Heart right ventricle (tissue), 16 donors: ENCODE measurements at regions of chr11 and their contacts with region 1.

Region 1: DNA sequence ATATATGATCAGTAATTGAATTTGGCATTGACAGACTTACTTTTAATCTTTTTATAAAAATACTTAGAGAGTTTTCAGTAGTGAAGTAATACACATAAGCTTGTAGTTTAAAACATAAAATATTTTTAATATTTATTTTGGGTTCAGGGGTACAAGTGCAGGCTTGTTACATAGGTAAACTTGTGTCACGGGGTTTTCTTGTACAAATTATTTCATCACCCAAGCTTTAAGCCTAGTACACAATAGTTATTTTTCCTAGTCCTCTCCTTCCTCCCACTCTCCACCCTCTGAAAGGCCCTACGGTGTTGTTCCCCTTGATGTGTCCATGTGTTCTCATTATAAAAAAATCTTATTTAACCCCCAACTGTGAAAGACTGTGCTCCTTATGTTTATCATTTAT is 1397.8 kb upstream of the RAG2 start:
- DNase-seq: no peak
- ATAC-seq: no peak
- H3K4me3 ChIP-seq: no peak overlapping the region
- H3K27ac ChIP-seq: no peak overlapping the region
- H3K4me1 ChIP-seq: no peaks in the 10 kb centered on the region
- H3K27me3 ChIP-seq: no peaks in the 10 kb centered on the region
- CTCF ChIP-seq: no peak

Region 2: DNA sequence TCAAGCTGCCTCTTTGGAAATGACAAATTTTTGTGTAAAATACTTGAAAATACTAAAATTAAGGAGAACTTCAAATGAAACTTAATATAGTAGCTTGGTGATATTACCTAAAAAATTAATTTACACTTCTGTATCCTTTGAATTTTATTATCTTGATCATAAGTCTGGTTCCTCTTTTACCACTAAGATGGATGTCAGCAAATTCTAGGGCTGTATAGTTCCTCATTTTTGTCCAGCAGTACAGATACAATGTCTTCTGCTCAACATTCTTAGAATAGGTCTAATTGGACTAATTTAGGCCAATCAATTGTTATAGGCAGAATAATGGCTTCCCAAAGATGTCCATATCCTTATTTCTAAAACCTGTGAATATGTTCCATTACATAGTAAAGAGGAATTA is 99.9 kb before region 1 on chr11:
- intact Hi-C with region 1: no loop called
- DNase-seq: no peak
- ATAC-seq: no peak
- H3K4me3 ChIP-seq: no peak overlapping the region
- H3K27ac ChIP-seq: no peak overlapping the region
- H3K4me1 ChIP-seq: no peaks in the 10 kb centered on the region
- H3K27me3 ChIP-seq: no peaks in the 10 kb centered on the region
- CTCF ChIP-seq: no peak

Region 3: GRCh38 chr11:37972691-37973090 is 23.2 kb before region 1 on chr11:
- intact Hi-C with region 1: loop called in 1 of 10 experiments (anchors 1 kb)
- DNase-seq: no peak
- ATAC-seq: no peak
- H3K4me3 ChIP-seq: no peak overlapping the region
- H3K27ac ChIP-seq: peak overlapping the region in 3 of 10 donors; percentile 3 to 19 (median 7)
- H3K4me1 ChIP-seq: peaks cover 0 to 5% (median 0%) of the 10 kb centered on the region in 9 donors
- H3K27me3 ChIP-seq: no peaks in the 10 kb centered on the region
- CTCF ChIP-seq: no peak